ENCODE measurements at regions of chrX and their contacts with region 1.

Region 1: GRCh38 chrX:30652527-30653414 is 452 bp upstream of the GK start:
- DNase-seq: peak; percentile 97
- H3K4me3 ChIP-seq: peak overlapping the region; percentile 43 to 63 (median 59)
- H3K27ac ChIP-seq: peak overlapping the region; percentile 53 to 78 (median 76)
- H3K4me1 ChIP-seq: peaks cover 0 to 13% (median 0%) of the 10 kb centered on the region in 4 donors
- H3K27me3 ChIP-seq: no peaks in the 10 kb centered on the region
- CTCF ChIP-seq: no peak
- EP300 ChIP-seq: no peak
- POLR2A ChIP-seq: peak in 1 of 2 donors; percentile 39

Region 2: DNA sequence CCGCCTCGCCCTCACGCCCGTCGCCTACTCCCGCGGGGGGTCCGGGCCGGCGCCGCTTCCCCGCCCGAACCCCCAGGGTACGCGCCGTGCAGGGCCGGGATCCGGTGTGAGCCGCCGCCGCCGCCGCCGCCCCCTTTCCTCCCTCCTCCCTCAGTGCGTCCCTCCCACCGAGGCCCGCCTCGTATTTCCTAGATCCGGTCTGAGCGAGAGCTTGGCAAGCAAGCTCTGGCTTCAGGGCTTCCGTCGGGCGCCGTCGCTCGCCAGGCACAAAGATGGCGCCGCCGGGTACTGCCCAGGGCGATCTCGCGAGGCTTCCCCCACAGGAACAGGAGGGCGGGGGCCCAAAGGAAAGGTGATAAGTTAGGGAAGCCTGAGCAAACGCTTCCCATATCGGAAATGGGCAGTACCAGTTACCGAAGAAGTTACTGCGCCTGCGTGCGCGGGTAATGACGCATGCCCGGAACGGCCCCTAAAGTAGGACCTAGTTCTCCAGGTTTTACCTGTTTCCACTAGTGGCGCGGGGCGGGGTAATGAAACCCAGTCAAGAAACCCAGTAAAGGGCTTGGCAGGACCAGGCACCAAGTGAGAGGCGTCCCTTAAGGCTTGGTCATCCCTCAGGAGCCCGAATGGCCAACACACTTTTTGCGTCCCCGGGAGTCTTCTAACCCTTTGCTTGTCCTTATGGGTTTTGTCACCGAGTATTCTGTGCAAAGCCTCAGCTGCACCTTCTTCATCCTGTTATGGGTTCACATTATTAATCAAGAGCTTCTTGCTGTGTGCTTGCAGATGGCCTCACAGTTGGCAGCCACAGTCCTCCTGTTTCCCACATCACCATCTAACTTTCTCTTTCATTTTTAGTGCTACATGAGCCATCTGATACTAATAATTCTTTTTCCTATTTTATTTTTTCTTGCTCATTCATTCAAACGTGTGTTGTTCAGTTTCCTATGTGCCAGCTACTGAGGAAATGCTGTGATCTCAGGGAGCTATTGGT is 236.7 kb after region 1 on chrX and contains the start of gene TAB3:
- intact Hi-C with region 1: loop called (anchors 2 kb)
- DNase-seq: peak; percentile 97
- H3K4me3 ChIP-seq: peak within 1 kb of the TSS; percentile 45 to 90 (median 83)
- H3K27ac ChIP-seq: peak within 1 kb of the TSS; percentile 81 to 88 (median 86)
- H3K4me1 ChIP-seq: peaks cover 0 to 11% (median 8%) of the 10 kb centered on the region in 4 donors
- H3K27me3 ChIP-seq: no peaks in the 10 kb centered on the region
- CTCF ChIP-seq: no peak
- EP300 ChIP-seq: peak in 1 of 4 donors; percentile 37
- POLR2A ChIP-seq: no peak
- total RNA-seq, gene TAB3: 17.4 to 31.6 (median 19.5) TPM

Measured in sigmoid colon (tissue), 7 donors.